ENCODE measurements at regions of chr18 and their contacts with region 1.

Region 1: DNA sequence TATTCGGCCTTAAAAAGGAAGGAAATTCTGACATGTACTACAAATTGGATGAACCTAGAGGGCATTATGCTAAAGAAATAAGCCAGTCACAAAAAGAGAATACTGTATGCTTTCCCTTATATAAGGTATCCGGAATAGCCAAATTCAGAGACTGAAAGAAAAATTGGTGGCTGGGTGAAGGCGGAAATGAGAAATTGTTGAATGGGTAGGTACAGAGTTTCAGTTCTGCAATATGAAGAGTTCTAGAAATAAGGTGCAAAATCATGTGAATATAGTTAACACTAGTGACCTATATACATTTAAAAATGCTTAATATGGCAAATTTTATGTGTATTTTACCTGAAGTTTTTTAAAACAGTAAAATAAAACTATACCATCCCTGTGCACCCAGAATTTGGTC is 43.1 kb downstream of the RMP24 start:
- DNase-seq: no peak
- ATAC-seq: no peak
- H3K4me3 ChIP-seq: no peak overlapping the region
- H3K4me3 Mint-ChIP-seq: no peak overlapping the region
- H3K27ac ChIP-seq: no peak overlapping the region
- H3K27ac Mint-ChIP-seq: no peak overlapping the region
- H3K4me1 ChIP-seq: no peaks in the 10 kb centered on the region
- H3K4me1 Mint-ChIP-seq: peaks cover 8% of the 10 kb centered on the region
- H3K27me3 ChIP-seq: no peaks in the 10 kb centered on the region
- H3K27me3 Mint-ChIP-seq: no peaks in the 10 kb centered on the region
- CTCF ChIP-seq: no peak

Region 2: GRCh38 chr18:35407871-35408481 is 607.7 kb before region 1 on chr18:
- CTCF ChIA-PET with region 1: no interaction called
- POLR2A ChIA-PET with region 1: no interaction called
- intact Hi-C with region 1: no loop called
- DNase-seq: peak in 6 of 9 experiments; percentile 10 to 75 (median 41)
- ATAC-seq: peak; percentile 81
- H3K4me3 ChIP-seq: no peak overlapping the region
- H3K4me3 Mint-ChIP-seq: no peak overlapping the region
- H3K27ac ChIP-seq: no peak overlapping the region
- H3K27ac Mint-ChIP-seq: no peak overlapping the region
- H3K4me1 ChIP-seq: peaks cover 6% of the 10 kb centered on the region
- H3K4me1 Mint-ChIP-seq: peaks cover 11% of the 10 kb centered on the region
- H3K27me3 ChIP-seq: no peaks in the 10 kb centered on the region
- H3K27me3 Mint-ChIP-seq: no peaks in the 10 kb centered on the region
- CTCF ChIP-seq: peak; percentile 91

Region 3: DNA sequence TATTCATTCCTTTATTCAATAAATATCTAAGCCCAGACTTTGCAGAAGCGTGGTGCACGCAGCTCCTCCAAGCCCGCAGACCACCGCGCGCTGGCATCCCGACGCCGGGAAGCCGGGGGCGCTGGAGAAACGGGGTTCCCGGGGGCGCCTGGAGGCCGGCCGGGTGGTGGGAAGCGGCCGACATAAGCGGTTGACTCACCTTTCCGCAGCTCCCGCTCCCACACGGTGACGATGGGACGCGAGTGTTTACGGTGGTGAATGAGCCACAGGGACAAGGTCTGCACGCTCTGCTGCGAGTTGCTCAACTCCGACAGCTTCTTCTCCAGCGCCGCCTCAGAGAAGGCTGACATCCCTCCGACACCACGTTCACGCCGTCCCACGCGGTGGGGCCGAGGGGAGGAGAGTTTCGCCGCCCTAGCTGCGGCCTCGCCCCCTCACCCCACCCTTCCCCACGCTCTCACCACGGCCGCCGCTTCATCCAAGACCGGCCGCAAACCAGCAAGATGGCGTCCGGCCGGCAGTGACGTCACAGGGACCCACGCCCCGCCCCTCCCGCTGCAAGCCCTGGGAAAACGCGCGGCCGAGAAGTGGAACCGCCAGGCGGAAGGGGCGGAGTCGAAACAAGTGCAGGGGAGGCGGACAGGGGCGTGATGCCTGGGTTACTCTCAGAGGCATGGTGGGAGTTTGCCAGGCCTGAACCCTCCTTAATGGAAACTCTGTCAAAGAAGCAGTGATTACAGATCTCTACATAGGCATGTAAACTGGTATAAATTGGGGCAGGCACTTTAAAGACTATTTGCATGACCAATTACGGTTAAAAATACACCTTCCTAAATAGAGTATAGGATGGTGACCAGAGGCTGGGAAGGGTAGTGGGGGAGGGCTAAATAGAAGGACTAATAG is 51.7 kb after region 1 on chr18 and contains the start of gene RPRD1A:
- CTCF ChIA-PET with region 1: interaction called, 5 read pairs
- POLR2A ChIA-PET with region 1: no interaction called
- intact Hi-C with region 1: loop called in 1 of 2 experiments (anchors 10 kb)
- DNase-seq: peak; percentile 92 to 99 (median 97)
- ATAC-seq: peak; percentile 93
- H3K4me3 ChIP-seq: peak within 1 kb of the TSS; percentile 95 to 98
- H3K4me3 Mint-ChIP-seq: peak within 1 kb of the TSS; percentile 94
- H3K27ac ChIP-seq: peak within 1 kb of the TSS; percentile 88 to 89
- H3K27ac Mint-ChIP-seq: peak within 1 kb of the TSS; percentile 96
- H3K4me1 ChIP-seq: peaks cover 29% of the 10 kb centered on the region
- H3K4me1 Mint-ChIP-seq: peaks cover 46% of the 10 kb centered on the region
- H3K27me3 ChIP-seq: no peaks in the 10 kb centered on the region
- H3K27me3 Mint-ChIP-seq: peaks cover 3% of the 10 kb centered on the region
- CTCF ChIP-seq: no peak
- total RNA-seq, gene RPRD1A: 13.8 to 15.8 TPM

Region 4: DNA sequence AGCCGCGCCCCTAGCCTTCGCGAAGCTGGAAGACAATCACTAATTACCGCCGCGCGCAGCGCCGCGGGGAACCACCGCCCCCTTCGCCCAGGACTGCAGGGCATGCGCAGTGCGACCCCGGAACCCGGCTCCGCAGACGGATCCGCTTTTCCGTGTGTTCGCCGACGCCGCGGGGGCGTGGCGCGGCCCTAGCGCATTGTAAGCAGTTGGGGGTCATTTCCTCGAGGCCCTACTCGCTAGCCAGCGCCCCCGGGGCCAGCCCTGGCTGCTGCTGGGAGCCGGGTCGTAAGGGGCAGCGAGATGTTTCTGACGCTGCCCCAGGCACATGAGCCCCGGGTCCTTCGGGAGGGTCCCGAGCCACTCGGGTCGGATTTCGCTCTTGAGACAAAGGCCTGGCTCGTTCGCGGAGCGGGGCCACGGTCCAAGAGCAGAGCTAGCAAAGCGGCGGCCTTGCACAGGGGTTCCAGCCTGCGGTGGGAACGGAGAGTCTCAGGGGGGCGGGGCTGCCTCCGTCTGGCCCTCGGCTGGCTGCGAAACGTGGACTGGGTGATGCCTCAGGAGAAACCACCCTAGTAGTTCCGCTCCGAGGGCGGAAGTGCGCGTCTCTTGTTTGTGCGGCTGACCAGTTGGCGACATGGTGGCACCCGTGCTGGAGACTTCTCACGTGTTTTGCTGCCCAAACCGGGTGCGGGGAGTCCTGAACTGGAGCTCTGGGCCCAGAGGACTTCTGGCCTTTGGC is 113.8 kb after region 1 on chr18 and contains the starts of genes ELP2 and SLC39A6:
- CTCF ChIA-PET with region 1: no interaction called
- POLR2A ChIA-PET with region 1: interaction called, 3 read pairs
- intact Hi-C with region 1: loop called in 1 of 2 experiments (anchors 1 kb)
- DNase-seq: peak; percentile 88 to 98 (median 96)
- ATAC-seq: peak; percentile 87
- H3K4me3 ChIP-seq: peak within 1 kb of the TSS; percentile 97 to 100
- H3K4me3 Mint-ChIP-seq: peak within 1 kb of the TSS; percentile 95
- H3K27ac ChIP-seq: peak within 1 kb of the TSS; percentile 94 to 98
- H3K27ac Mint-ChIP-seq: peak within 1 kb of the TSS; percentile 98
- H3K4me1 ChIP-seq: peaks cover 47% of the 10 kb centered on the region
- H3K4me1 Mint-ChIP-seq: peaks cover 68% of the 10 kb centered on the region
- H3K27me3 ChIP-seq: no peaks in the 10 kb centered on the region
- H3K27me3 Mint-ChIP-seq: no peaks in the 10 kb centered on the region
- CTCF ChIP-seq: no peak
- total RNA-seq, gene ELP2: 212 to 222 TPM
- total RNA-seq, gene SLC39A6: 12.3 to 14.4 TPM

Region 5: DNA sequence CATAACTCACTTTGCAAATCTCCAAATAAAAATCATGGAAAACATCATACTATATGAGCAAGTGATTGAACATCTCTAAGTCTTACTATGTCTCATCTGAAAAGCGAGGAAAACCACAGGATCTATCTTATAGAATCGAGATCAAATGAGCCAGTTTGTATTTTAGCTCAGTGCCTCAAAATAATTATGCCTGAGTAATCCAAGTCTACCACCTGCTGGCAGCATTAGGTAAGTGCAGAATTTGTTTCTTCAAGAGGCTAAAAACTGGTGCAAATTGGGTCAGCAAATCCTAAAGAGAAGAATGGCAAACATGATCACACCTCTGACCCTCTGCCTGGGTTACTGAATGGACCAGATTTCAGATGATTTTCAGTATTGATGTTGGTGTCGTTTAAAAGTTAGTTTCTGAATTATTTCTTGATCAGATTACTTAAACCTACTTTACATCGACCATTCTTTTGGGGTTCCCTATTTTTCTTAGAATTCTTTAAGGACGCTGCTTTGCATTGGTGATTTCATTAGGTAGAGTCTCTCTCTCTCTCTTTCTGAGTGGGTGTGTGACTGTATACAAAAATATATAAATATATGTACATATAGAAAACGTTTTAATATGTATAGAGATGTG is 269.2 kb after region 1 on chr18:
- CTCF ChIA-PET with region 1: interaction called, 66 read pairs
- POLR2A ChIA-PET with region 1: no interaction called
- intact Hi-C with region 1: loop called (anchors 1 kb)
- DNase-seq: peak in 8 of 9 experiments; percentile 16 to 75 (median 46)
- ATAC-seq: peak; percentile 77
- H3K4me3 ChIP-seq: no peak overlapping the region
- H3K4me3 Mint-ChIP-seq: no peak overlapping the region
- H3K27ac ChIP-seq: no peak overlapping the region
- H3K27ac Mint-ChIP-seq: no peak overlapping the region
- H3K4me1 ChIP-seq: no peaks in the 10 kb centered on the region
- H3K4me1 Mint-ChIP-seq: peaks cover 2% of the 10 kb centered on the region
- H3K27me3 ChIP-seq: no peaks in the 10 kb centered on the region
- H3K27me3 Mint-ChIP-seq: peaks cover 23% of the 10 kb centered on the region
- CTCF ChIP-seq: peak; percentile 95

Region 6: GRCh38 chr18:36572135-36572856 is 556.7 kb after region 1 on chr18:
- CTCF ChIA-PET with region 1: no interaction called
- POLR2A ChIA-PET with region 1: no interaction called
- intact Hi-C with region 1: loop called in 1 of 2 experiments (anchors 5 kb)
- DNase-seq: peak in 2 of 9 experiments; percentile 20 to 34
- ATAC-seq: no peak
- H3K4me3 ChIP-seq: no peak overlapping the region
- H3K4me3 Mint-ChIP-seq: no peak overlapping the region
- H3K27ac ChIP-seq: no peak overlapping the region
- H3K27ac Mint-ChIP-seq: no peak overlapping the region
- H3K4me1 ChIP-seq: no peaks in the 10 kb centered on the region
- H3K4me1 Mint-ChIP-seq: peaks cover 2% of the 10 kb centered on the region
- H3K27me3 ChIP-seq: no peaks in the 10 kb centered on the region
- H3K27me3 Mint-ChIP-seq: no peaks in the 10 kb centered on the region
- CTCF ChIP-seq: no peak

Region 7: DNA sequence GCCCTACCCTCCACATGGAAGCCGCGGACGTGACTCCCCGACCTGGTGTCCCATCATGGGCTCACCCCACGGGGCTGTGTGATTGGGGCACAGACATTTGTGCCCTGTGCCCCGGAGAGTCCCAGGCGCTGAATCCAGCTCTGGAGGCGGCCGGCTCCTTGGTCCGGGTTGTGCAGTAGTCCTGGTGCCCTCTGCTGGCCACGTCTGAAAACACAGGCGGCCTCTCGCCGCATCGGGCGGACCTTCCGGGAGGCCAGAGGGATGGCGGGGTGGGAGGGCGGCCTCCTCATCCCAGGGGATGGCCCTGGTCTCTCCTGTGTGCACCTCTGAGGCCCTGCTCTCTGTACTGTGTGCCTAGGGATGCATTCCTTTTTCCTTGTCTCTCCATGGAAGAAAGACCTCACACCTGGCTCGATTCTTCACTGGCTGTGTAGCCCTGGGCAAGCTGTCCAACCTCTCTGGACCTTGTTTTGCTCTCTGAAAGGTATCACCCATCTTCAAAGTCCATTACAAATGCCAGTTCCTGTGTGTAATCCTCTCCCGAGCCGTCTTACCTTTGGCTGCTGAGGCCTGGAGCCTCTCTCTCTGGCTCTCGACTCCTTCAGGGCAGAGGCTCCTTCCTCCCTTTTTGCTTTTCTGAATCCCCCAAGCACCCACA is 1522.4 kb after region 1 on chr18:
- CTCF ChIA-PET with region 1: no interaction called
- POLR2A ChIA-PET with region 1: no interaction called
- intact Hi-C with region 1: loop called in 1 of 2 experiments (anchors 10 kb)
- DNase-seq: peak in 4 of 9 experiments; percentile 7 to 18 (median 12)
- ATAC-seq: no peak
- H3K4me3 ChIP-seq: no peak overlapping the region
- H3K4me3 Mint-ChIP-seq: no peak overlapping the region
- H3K27ac ChIP-seq: no peak overlapping the region
- H3K27ac Mint-ChIP-seq: no peak overlapping the region
- H3K4me1 ChIP-seq: peaks cover 3% of the 10 kb centered on the region
- H3K4me1 Mint-ChIP-seq: peaks cover 2% of the 10 kb centered on the region
- H3K27me3 ChIP-seq: no peaks in the 10 kb centered on the region
- H3K27me3 Mint-ChIP-seq: peaks cover 32% of the 10 kb centered on the region
- CTCF ChIP-seq: no peak